ENCODE measurements at regions of chr21 and their contacts with region 1.

Region 1: DNA sequence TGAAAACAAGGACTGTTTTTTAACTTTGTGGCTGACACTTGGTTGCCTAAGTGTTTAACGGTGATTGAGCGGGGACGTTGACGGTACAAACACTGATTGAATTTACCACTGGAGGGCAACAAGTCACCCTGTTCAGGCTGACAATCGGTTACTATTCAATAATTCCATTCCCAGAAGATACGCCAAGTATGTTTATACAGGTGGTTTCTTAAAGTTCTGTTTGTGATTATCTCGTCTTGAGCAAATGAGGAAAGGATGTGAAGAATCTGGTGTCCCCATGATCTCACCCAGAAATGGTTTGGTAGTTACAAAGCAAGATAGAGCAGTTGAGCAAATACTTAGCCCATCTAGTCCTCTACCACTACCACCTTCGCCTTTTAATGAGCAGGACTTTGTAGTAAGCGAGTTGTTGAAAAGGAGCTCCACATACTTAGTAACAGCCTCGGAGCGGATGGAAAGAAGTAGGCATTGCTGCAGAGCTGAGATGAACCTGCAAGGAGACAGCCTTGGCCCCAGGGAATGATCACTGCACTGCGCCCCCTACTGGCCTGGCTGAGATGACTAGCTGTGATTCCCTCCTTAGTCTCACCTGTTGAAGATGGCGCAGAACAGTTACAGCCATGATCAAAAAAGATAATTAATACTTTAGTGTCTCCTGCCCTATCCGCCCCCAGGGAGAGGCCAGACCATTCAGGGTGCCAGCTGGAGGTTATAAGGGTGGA is 36.3 kb downstream of the IFNAR1 start:
- DNase-seq: peak; percentile 94
- H3K4me3 Mint-ChIP-seq: peak overlapping the region; percentile 70
- H3K27ac Mint-ChIP-seq: peak overlapping the region; percentile 75
- H3K4me1 Mint-ChIP-seq: peaks cover 13% of the 10 kb centered on the region
- H3K27me3 Mint-ChIP-seq: no peaks in the 10 kb centered on the region

Region 2: DNA sequence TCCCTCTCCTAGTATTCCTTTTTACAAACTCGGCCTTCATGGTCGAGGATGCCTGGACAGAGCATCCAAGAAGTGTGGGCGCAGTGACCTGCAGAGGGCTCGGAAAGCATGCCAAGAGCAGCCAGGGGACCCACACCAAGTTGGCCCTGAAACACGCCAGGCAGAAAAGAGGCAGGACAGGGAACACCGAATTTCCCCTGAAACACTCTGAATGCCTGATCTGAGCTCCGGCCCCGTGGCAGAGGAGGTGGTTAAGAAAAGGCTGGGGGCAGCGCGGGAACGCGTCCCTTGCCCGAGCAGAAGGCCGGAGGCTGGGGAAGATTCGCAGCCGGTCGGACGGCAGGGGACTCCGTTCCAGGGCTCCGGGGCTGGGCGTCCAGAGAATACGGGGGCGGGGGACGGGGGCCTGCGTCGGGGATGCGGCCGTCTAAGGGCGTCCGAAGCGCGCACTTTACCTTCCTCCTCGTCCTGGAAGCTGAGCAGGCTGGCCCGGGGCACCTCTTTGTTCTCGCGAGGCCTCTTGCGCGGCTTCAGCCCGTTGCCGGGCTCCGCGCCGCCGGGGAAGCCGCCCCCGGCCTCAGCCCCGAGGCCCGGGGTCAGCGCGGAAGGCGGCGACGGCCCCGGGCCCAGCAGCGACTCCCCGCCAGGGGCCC is 590.0 kb before region 1 on chr21:
- CTCF ChIA-PET with region 1: interaction called, 7 read pairs
- POLR2A ChIA-PET with region 1: no interaction called
- intact Hi-C with region 1: loop called (anchors 5 kb)
- DNase-seq: peak; percentile 69
- H3K4me3 Mint-ChIP-seq: peak overlapping the region; percentile 98
- H3K27ac Mint-ChIP-seq: peak overlapping the region; percentile 93
- H3K4me1 Mint-ChIP-seq: peaks cover 61% of the 10 kb centered on the region
- H3K27me3 Mint-ChIP-seq: peaks cover 3% of the 10 kb centered on the region

Region 3: DNA sequence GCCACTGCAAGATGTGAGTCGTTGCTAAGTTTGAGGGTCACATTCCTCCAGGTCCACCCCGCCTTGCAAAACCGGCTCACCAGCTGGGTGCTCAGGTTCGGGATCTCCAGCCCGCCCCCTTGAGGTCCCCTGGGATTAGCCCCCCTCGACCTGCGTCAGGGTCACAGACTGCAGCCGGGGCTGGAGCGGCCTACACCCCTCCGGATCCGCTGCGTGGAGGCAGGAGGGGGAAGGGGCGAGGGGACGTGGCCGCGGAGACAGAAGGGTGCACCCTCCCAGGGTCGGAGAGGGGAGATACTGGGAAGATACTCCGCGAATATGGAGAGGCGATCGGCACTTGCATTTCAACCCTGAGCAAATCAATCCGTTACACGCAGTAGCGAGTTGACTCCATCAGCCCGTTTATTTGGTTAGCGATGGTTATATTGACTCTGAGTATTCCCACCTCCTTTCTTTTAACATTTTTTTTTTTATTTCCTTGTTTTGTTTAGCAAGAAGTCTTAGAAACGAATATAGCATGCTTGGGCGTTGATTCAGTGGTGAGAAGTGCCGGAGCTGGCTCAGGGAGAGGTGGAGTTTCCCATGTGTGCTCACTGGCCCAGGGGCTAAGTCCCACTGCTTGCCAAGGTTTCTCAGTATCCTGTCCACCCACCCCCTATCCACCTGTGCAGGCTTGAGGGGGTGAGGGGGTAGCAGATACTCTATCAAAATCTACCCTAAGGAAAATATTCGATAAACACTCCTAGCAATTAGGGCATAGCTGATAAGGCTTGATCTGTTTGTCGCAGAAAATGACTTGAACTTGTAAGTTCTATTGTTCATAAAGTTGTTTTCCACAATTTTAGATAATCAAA is 130.3 kb before region 1 on chr21:
- CTCF ChIA-PET with region 1: interaction called, 13 read pairs
- POLR2A ChIA-PET with region 1: interaction called, 5 read pairs
- intact Hi-C with region 1: no loop called
- DNase-seq: peak; percentile 48
- H3K4me3 Mint-ChIP-seq: peak overlapping the region; percentile 90
- H3K27ac Mint-ChIP-seq: peak overlapping the region; percentile 91
- H3K4me1 Mint-ChIP-seq: peaks cover 54% of the 10 kb centered on the region
- H3K27me3 Mint-ChIP-seq: no peaks in the 10 kb centered on the region

Region 4: DNA sequence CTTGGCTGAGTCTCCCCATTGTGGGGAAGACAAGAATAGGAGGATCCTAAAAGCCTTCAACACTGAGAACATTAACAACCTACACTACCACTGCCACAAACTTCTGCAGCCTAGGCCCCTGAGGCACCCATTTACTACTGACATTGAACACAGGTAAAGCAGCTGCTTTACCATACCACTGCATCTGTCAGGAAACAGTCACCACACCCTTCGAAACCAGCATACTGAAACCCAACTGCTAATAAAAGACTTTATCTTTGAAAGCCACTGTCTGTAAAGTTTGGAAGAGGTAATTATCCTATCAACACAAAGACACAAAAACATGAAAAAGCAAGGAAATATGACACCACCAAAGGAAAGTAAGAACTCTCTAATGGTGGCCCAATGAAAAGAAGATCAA is 28.9 kb before region 1 on chr21:
- CTCF ChIA-PET with region 1: interaction called, 35 read pairs
- POLR2A ChIA-PET with region 1: no interaction called
- intact Hi-C with region 1: loop called (anchors 5 kb)
- DNase-seq: no peak
- H3K4me3 Mint-ChIP-seq: no peak overlapping the region
- H3K27ac Mint-ChIP-seq: no peak overlapping the region
- H3K4me1 Mint-ChIP-seq: peaks cover 52% of the 10 kb centered on the region
- H3K27me3 Mint-ChIP-seq: no peaks in the 10 kb centered on the region

Region 5: DNA sequence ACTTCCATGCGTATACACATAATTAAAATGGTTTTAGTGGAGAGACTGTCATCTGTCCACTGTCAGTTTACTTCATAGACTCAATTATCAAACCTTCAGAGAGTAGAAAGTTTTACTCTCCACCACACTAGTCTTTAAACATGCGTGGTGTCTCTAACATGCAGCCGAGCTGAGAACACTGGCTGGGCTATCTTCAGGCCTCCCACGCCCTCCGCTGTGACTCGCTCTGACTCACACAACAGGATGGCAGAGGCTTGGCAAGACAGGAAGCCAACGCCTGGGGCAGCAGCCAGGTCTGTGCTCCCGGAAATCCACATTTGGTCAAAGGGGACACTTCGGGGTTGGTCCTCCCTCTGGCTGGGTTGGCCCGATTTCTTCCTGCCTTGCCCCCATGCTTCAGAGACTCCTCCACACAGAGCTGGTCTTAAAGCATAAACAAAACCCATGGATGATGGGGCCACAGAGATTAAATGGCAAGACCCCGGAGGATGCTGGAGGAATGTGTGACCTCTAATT is 19.5 kb after region 1 on chr21:
- CTCF ChIA-PET with region 1: interaction called, 24 read pairs
- POLR2A ChIA-PET with region 1: interaction called, 10 read pairs
- intact Hi-C with region 1: loop called (anchors 1 kb)
- DNase-seq: peak; percentile 97
- H3K4me3 Mint-ChIP-seq: peak overlapping the region; percentile 44
- H3K27ac Mint-ChIP-seq: peak overlapping the region; percentile 81
- H3K4me1 Mint-ChIP-seq: peaks cover 61% of the 10 kb centered on the region
- H3K27me3 Mint-ChIP-seq: peaks cover 10% of the 10 kb centered on the region

Region 6: DNA sequence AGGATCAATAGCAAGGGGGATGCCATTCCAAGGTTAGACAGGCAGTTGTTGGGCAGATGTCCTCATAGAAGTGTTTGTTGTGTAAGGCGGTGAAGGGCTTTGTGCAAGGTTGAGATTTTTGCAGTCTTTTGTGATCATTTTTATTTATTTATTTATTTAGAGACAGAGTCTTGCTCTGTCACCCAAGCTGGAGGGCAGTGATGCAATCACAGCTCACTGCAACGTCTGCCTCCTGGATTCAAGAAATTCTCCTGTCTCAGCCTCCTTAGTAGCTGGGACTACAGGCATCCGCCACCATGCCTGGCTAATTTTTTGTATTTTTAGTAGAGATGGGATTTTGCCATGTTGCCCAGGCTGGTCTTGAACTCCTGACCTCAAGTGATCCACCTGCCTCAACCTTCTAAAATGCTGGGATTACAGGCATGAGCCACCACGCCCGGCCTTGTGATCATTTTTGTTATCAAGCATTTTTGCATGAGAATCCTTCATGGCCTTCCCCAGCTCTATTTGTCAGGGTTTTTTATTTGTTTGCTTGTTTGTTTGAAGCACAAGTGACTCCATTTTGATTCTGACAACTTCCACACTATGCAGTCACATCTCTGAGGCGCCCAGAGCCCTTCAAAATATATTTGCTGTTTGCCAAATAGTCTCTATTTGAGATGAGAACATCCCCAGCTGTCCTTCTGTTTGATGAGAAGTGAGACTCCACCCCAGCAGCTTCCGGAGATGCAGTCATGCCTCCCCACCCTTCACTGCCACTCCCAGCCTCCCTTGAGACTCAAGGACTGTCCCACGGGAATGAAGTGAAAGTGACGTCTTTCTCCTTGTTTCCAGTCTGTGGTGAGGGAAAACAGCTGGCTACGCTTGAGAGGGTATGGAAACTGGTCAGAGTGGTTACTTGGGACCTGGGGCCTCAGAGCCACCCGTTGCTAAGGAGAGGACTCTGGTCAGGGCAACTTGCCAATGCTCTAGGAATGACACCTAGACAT is 80.7 kb after region 1 on chr21:
- CTCF ChIA-PET with region 1: interaction called, 72 read pairs
- POLR2A ChIA-PET with region 1: no interaction called
- intact Hi-C with region 1: loop called (anchors 1 kb)
- DNase-seq: no peak
- H3K4me3 Mint-ChIP-seq: no peak overlapping the region
- H3K27ac Mint-ChIP-seq: no peak overlapping the region
- H3K4me1 Mint-ChIP-seq: peaks cover 3% of the 10 kb centered on the region
- H3K27me3 Mint-ChIP-seq: no peaks in the 10 kb centered on the region

Region 7: DNA sequence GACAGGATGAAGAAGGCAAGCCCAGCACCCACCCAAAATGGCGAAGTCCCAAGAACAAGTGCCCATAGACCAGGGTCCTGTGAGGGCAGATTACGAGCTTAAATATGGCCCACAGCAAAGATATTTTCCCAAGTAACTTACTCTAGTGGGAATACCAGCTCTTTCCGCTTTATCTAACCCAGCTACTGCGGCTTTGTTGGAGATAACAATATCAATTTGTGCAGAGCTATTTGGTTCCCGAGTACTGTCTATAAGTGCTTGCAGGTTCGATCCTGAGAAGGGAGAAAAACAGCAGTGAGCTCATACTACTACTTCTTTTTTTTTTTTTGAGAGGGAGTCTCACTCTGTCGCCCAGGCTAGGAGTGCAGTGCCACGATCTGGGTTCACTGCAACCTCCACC is 144.8 kb after region 1 on chr21:
- CTCF ChIA-PET with region 1: no interaction called
- POLR2A ChIA-PET with region 1: no interaction called
- intact Hi-C with region 1: no loop called
- DNase-seq: no peak
- H3K4me3 Mint-ChIP-seq: no peak overlapping the region
- H3K27ac Mint-ChIP-seq: no peak overlapping the region
- H3K4me1 Mint-ChIP-seq: no peaks in the 10 kb centered on the region
- H3K27me3 Mint-ChIP-seq: no peaks in the 10 kb centered on the region